ENCODE measurements at regions of chr11 and their contacts with region 1.

Region 1: DNA sequence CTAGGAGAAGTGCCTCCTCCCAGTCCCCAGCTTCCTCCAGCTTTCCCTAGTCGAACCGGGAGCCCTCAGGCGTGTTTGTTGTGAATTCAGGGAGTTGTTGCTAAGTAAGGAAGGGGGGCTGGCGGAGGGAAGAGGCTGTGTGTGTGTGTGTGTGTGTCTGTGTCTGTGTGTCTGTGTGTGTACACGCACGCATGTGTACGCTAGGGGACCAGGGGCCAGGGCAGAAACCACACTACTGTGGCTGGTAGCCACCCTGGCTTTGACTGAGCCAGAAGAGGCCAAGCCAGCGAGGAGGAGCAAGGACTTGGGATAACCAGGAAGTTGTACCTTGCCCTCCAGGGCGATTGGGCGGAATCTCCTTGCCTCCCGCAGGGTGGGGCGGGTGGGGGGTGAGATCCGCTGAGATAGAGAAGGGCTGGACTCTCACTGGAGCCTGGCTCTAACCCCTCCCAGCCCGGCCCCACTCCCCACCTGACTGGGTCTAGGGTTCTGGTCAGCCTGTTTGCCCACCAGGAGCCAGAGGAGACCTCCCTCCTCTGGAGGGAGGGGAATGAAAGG is 7.5 kb downstream of the BCL9L start:
- DNase-seq: peak; percentile 87
- H3K4me3 ChIP-seq: peak overlapping the region; percentile 38
- H3K27me3 ChIP-seq: no peaks in the 10 kb centered on the region
- CTCF ChIP-seq: no peak

Region 2: DNA sequence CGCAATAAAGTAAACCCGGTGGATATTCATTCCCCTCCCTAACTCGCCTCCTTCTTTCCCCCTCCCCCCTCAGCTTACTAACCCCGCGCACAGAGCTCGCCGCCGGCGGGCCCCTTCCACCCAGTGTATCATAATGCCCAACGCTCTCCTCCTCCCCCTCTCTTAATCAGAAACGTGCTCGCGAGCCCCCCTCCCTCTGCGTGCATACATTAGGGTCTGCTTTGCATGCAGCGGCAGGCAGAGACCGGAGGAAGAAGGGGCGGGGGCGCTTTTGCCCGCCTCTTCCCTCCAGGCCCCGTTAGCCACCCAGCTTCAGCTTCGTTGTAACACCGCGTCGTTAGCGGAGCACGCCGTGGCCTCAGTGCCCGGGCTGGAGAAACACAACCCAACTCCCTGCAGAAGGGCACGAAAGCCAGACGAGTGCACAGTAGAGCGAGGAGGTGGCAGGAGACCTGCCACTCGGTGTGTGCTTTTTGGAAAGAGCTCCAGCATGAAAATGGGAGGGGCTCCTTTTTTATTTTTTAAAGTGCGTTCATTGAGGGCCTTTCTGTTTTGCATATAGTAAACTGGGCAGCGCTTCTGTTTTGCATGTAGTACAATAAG is 482.8 kb before region 1 on chr11:
- CTCF ChIA-PET with region 1: no interaction called
- POLR2A ChIA-PET with region 1: interaction called, 11 read pairs
- DNase-seq: no peak
- H3K4me3 ChIP-seq: peak overlapping the region; percentile 63
- H3K27me3 ChIP-seq: no peaks in the 10 kb centered on the region
- CTCF ChIP-seq: no peak

Region 3: DNA sequence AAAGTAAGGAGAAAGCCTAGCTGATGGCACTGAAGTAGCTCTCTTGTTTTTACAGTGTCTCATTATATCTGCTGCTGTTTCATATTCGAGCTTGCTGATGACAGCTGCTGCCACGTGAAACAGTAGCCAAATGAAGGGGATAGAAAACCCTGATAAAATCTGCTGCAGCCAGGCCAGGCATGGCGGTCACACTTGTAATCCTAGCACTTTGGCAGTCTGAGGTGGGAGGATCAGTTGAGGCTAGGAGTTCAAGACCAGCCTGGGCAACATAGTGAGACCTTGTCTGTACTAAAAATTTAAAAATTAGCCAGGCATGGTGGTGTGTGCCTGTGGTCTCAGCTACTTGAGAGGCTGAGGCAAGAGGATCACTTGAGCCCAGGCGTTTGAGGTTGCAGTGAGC is 365.9 kb before region 1 on chr11:
- CTCF ChIA-PET with region 1: no interaction called
- POLR2A ChIA-PET with region 1: interaction called, 17 read pairs
- DNase-seq: no peak
- H3K4me3 ChIP-seq: no peak overlapping the region
- H3K27me3 ChIP-seq: no peaks in the 10 kb centered on the region
- CTCF ChIP-seq: no peak